T-cell (primary cell): ENCODE measurements at regions of chrX and their contacts with region 1.

Region 1: DNA sequence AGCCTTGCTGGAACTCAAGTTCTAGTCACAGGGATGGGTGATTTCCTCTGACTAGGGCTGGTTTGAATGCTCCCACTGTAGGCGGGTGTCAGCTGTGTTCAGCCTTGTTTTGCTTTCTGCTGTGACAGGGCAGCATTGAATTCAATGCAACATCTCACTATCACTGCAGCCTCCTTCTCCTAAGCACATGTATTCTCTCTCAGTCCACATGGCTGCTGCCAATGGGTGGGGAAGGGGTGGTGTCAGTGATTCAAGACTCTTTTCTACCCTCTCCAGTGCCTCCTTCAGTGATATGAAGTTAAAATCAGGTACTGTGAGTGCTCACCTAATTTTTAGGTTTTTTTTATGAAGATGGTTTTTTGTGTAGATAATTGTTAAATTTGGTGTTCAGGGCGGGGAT is 46.3 kb downstream of the COL4A5 start:
- DNase-seq: no peak
- ATAC-seq: no peak
- H3K4me3 ChIP-seq: no peak overlapping the region
- H3K4me3 Mint-ChIP-seq: no peak overlapping the region
- H3K27ac ChIP-seq: no peak overlapping the region
- H3K27ac Mint-ChIP-seq: no peak overlapping the region
- H3K4me1 ChIP-seq: no peaks in the 10 kb centered on the region
- H3K4me1 Mint-ChIP-seq: no peaks in the 10 kb centered on the region
- H3K27me3 ChIP-seq: no peaks in the 10 kb centered on the region
- H3K27me3 Mint-ChIP-seq: peaks cover 0 to 7% of the 10 kb centered on the region in 2 donors

Region 2: GRCh38 chrX:108177351-108178142 is 308.4 kb before region 1 on chrX:
- CTCF ChIA-PET with region 1: no interaction called
- POLR2A ChIA-PET with region 1: no interaction called
- DNase-seq: no peak
- ATAC-seq: no peak
- H3K4me3 ChIP-seq: no peak overlapping the region
- H3K4me3 Mint-ChIP-seq: no peak overlapping the region
- H3K27ac ChIP-seq: no peak overlapping the region
- H3K27ac Mint-ChIP-seq: no peak overlapping the region
- H3K4me1 ChIP-seq: no peaks in the 10 kb centered on the region
- H3K4me1 Mint-ChIP-seq: no peaks in the 10 kb centered on the region
- H3K27me3 ChIP-seq: no peaks in the 10 kb centered on the region
- H3K27me3 Mint-ChIP-seq: peaks cover under 1 to 4% of the 10 kb centered on the region in 2 donors

Region 3: GRCh38 chrX:108614616-108615015 is 128.7 kb after region 1 on chrX:
- CTCF ChIA-PET with region 1: no interaction called
- POLR2A ChIA-PET with region 1: no interaction called
- DNase-seq: no peak
- ATAC-seq: no peak
- H3K4me3 ChIP-seq: no peak overlapping the region
- H3K4me3 Mint-ChIP-seq: no peak overlapping the region
- H3K27ac ChIP-seq: no peak overlapping the region
- H3K27ac Mint-ChIP-seq: no peak overlapping the region
- H3K4me1 ChIP-seq: no peaks in the 10 kb centered on the region
- H3K4me1 Mint-ChIP-seq: no peaks in the 10 kb centered on the region
- H3K27me3 ChIP-seq: no peaks in the 10 kb centered on the region
- H3K27me3 Mint-ChIP-seq: peaks cover 0 to 9% of the 10 kb centered on the region in 2 donors

Region 4: GRCh38 chrX:109974906-109975655 is 1489.1 kb after region 1 on chrX:
- CTCF ChIA-PET with region 1: no interaction called
- POLR2A ChIA-PET with region 1: interaction called in 1 of 2 experiments, 10 read pairs
- DNase-seq: no peak
- ATAC-seq: peak in 1 of 4 experiments; percentile 26
- H3K4me3 ChIP-seq: no peak overlapping the region
- H3K4me3 Mint-ChIP-seq: no peak overlapping the region
- H3K27ac ChIP-seq: no peak overlapping the region
- H3K27ac Mint-ChIP-seq: no peak overlapping the region
- H3K4me1 ChIP-seq: no peaks in the 10 kb centered on the region
- H3K4me1 Mint-ChIP-seq: peaks cover 0 to 5% (median 0%) of the 10 kb centered on the region in 3 donors
- H3K27me3 ChIP-seq: peaks cover 0 to 2% of the 10 kb centered on the region in 2 experiments
- H3K27me3 Mint-ChIP-seq: peaks cover 6 to 22% of the 10 kb centered on the region in 2 donors